Endothelial cell of umbilical vein (primary cell): ENCODE measurements at regions of chr20 and their contacts with region 1.

Region 1: DNA sequence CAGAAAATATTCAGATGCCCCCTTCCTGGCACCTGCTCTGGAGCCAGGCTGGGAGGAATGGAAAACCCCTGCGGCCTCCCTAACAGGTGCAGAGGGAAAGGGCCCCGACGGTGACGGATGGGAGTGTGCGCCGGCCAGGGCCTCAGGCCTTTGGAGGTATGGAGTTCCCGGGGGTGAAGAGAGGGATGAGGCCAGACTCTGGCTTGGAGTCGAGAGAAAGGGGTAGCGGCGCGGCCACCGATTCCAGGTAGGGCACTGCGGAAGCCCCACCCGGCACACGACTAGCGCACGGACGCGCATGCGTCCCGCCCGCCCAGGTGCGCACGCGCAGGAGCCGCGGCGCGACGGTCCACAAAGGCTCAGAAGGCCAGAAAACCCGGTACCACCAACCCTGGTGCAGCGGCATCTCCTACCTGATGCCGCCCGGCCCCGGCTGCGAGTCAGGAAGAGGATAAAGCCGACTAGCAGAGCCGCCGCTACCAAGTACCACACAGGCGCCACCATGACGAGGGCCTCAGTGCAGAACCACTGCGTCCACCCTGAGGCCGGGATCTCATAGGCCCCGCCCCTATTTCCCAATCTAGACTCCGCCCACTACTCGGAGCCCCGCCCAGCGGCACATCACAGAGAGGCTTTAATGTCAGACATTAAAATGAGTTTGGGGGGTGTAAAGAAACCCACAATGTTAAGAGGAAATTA is at the start of gene DDRGK1:
- DNase-seq: peak; percentile 84
- H3K4me3 ChIP-seq: peak within 1 kb of the TSS; percentile 40 to 71 (median 69)
- H3K27ac ChIP-seq: peak within 1 kb of the TSS; percentile 35
- H3K4me1 ChIP-seq: peaks cover 15% of the 10 kb centered on the region
- H3K27me3 ChIP-seq: no peaks in the 10 kb centered on the region
- CTCF ChIP-seq: no peak
- POLR2A ChIP-seq: peak; percentile 95
- total RNA-seq, gene DDRGK1: 52.2 and 54.0 TPM in 2 replicates

Region 2: GRCh38 chr20:2663887-2664719 is 540.2 kb before region 1 on chr20 and contains the start of gene IDH3B:
- CTCF ChIA-PET with region 1: no interaction called
- POLR2A ChIA-PET with region 1: no interaction called
- dilution Hi-C with region 1: no loop called
- intact Hi-C with region 1: no loop called
- DNase-seq: peak; percentile 90
- H3K4me3 ChIP-seq: peak within 1 kb of the TSS; percentile 36 to 80 (median 62)
- H3K27ac ChIP-seq: peak within 1 kb of the TSS; percentile 54
- H3K4me1 ChIP-seq: peaks cover 11% of the 10 kb centered on the region
- H3K27me3 ChIP-seq: peaks cover 8 to 11% of the 10 kb centered on the region in 2 experiments
- CTCF ChIP-seq: no peak
- POLR2A ChIP-seq: peak; percentile 93
- total RNA-seq, gene IDH3B: 86.9 and 87.9 TPM in 2 replicates

Region 3: DNA sequence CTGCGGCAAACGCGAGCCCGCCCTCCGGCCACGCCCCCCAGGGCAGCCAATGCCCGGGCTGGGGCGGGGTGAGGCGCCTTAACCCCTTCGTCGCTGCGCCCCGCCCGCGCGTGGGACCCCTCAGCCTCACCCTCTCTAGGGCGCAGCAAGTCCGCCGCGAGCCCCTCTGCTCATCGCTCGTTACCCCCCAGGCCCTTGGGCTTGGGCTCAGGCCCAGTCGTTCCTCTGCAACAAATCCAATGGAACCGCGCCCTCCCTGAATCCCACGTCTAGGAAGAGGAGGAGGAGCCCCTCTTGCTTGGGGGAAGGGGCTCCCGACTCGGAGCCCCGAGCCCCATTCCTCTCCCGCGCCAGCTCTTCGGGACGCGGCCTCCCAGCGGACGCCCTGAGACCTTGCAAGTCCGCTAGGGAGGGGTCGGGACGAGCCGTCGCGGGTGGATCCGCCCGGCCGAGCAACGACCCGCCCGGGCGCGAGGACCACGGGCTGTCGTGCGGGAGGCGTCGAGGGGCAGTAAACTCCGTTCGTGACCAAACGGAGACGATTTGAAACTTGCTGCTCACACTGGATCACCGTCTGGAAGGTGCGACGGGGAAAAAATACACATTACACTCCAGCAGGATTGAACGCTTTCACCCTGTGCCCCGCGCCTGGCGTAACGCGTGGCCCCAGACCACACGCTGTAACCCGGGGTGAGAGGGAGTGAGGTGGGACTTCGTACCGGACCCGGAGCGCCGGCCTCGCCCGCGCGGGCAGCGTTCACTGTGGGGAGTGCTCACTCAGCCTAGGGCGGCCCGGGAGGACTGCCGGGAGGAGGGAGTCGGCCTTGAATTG is 30.4 kb before region 1 on chr20:
- CTCF ChIA-PET with region 1: no interaction called
- POLR2A ChIA-PET with region 1: no interaction called
- dilution Hi-C with region 1: no loop called
- intact Hi-C with region 1: loop called (anchors 2 kb)
- DNase-seq: peak; percentile 81
- H3K4me3 ChIP-seq: peak overlapping the region; percentile 68 to 93 (median 68)
- H3K27ac ChIP-seq: no peak overlapping the region
- H3K4me1 ChIP-seq: peaks cover 6% of the 10 kb centered on the region
- H3K27me3 ChIP-seq: peaks cover 3 to 6% of the 10 kb centered on the region in 2 experiments
- CTCF ChIP-seq: peak in 1 of 2 donors; percentile 28
- POLR2A ChIP-seq: peak; percentile 41

Region 4: DNA sequence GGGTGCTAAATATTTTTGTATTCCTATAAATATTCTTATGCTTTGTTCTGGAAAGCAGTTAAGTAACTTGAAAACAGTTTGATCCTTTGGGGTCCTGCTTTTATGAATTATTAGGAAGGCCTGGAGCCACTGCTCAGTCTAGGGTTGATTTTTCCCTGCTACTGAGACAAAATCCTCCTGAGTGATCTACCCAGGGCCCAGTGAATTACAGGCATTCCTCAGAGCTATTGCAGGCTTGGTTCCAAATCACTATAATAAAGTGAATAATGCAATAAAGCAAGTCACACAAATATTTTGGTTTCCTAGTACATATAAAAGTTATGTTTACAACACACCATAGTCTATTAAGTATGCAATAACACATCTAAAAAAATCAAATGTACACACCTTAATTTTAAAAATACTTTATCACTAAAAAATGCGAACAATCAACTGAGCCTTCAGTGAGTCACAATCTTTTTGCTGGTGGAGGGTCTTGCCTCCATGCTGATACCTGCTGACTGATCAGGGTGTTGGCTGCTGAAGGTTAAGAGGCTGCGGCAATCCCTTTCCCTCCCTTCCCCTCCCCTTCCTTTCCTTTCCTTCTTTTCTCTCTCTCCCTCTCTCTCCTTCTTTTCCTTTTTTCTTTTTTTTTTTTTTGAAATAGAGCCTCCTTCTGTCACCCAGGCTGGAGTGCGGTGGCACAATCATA is 160.2 kb after region 1 on chr20:
- CTCF ChIA-PET with region 1: no interaction called
- POLR2A ChIA-PET with region 1: no interaction called
- dilution Hi-C with region 1: no loop called
- intact Hi-C with region 1: no loop called
- DNase-seq: no peak
- H3K4me3 ChIP-seq: no peak overlapping the region
- H3K27ac ChIP-seq: no peak overlapping the region
- H3K4me1 ChIP-seq: no peaks in the 10 kb centered on the region
- H3K27me3 ChIP-seq: no peaks in the 10 kb centered on the region
- CTCF ChIP-seq: no peak
- POLR2A ChIP-seq: no peak